ENCODE measurements at regions of chr1 and their contacts with region 1.

Region 1: DNA sequence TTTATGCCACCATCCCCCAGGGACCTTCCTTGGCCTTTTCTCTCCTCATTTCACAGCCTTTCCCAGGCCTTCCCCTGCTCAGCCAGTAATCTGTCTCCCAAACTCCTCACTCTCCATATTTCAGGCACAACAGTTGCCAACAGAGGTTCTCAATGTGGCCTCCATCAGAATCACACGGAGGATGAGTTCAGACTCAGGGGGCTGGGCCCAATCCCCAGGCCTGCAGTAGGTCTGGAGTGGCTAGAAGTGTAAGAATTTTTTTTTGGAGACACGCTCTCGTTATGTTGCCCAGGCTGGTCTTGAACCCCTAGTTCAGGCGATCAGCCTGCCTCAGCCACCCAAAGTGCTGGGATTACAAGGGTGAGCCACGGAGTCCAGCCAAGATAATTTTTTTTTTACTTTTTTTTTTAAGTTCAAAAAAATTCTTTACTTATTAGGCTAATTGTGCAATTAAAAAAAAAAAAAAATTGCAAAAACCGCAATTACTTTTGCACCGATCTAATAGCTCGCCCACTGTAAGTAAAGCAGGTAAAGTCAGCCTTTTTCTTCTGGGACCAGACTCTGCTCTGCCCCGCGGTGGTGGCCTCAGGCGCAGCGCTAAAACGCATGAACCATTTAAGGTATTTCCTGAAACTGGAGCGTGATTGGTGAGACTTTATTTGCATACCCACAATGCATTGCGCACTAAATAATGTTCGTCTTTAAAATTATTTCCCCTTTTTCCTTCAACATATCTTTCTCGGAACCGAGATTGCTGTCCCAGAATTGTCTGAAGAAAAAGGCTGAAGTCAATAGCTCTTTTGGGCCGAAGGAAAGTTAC is 18.7 kb downstream of the KIAA2013 start:
- DNase-seq: peak; percentile 92
- H3K4me3 Mint-ChIP-seq: peak overlapping the region; percentile 87
- H3K27ac Mint-ChIP-seq: peak overlapping the region; percentile 98
- H3K4me1 Mint-ChIP-seq: peaks cover 23% of the 10 kb centered on the region
- H3K27me3 Mint-ChIP-seq: peaks cover 7% of the 10 kb centered on the region

Region 2: DNA sequence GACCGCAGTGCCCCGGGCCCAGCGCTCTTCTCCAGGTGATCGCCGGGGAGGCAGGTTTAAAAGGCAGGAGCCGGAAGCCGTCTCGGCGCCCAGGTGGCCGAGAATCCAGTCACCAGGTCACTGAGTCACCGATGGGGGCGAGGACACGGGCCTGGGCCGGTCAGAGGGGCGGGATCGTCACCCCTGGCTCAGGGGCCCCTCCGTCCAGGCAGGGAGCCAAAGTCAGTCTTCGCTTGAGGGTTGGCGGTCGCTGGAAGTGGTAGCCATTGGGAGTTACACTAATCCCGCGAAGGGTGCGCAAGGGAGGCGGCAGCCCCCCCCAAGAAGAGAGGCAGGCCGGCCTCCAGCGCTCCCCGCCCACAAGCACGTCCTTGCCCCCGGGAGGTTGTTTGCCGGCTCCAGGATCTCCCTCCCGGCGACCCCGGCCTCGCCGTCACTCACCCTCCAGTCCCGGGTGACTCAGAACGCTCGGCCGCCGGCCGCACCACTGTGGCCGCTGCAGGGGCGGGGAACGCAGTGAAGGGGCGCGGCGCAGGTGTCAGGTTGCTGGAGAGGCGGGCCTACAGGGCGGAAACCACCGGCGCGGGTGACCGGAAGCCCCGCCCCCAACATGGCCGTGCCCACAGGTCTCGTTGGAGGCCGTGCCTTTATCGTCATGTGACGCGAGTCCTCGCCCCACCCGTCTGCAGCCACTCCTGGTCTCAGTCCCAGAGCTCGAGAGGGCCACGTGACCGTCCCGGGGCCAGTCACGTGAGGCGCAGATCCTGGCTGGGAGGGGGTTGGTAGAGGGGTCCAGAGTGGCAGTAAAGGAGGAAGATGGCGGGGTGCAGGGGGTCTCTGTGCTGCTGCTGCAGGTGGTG is 101.8 kb before region 1 on chr1 and contains the starts of genes CLCN6 and MTHFR:
- intact Hi-C with region 1: loop called (anchors 5 kb)
- DNase-seq: peak; percentile 99
- H3K4me3 Mint-ChIP-seq: peak within 1 kb of the TSS; percentile 90
- H3K27ac Mint-ChIP-seq: peak within 1 kb of the TSS; percentile 88
- H3K4me1 Mint-ChIP-seq: peaks cover 56% of the 10 kb centered on the region
- H3K27me3 Mint-ChIP-seq: no peaks in the 10 kb centered on the region
- total RNA-seq, gene CLCN6: 18.8 and 18.9 TPM in 2 replicates
- total RNA-seq, gene MTHFR: 18.8 and 21.4 TPM in 2 replicates

Region 3: DNA sequence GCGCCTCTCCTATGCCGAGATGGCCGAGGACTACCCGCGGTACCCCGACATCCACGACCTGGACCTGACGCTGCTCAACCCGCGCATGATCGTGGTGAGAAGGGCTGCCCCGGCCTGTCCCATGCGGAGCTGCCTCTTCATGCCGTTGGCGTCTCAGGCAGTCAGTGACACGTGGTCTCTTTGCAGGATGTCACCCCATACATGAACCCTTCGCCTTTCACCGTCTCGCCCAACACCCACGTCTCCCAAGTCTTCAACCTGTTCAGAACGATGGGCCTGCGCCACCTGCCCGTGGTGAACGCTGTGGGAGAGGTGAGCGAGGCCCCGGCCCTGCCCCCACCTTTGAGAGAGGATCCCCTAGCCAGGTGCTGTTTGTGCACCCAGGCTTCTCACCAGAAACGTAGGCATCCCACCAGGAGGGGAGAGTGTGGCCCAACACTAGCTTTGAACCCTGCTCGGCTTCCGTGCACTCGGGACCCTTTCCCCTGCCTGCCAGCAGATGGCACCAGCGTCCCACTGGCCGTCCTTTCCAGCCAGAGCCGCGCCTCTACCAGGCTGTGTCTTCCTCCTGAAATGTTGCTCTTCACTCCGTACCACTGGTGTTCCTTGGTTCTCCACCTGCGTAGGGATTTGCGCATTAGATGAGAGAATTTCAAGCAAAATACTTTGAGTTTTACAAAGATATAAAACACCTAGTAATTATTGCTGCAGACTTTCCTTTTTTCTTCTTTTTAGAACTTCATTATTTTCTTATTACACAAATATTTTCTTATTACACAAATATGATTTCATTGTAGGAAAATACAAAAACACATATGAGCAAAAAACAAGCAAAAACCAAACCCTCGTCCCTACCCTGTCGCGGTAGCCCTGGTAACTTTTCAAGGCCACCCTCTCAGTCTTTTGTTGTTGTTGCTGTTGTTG is 68.9 kb before region 1 on chr1:
- intact Hi-C with region 1: loop called (anchors 5 kb)
- DNase-seq: peak; percentile 59
- H3K4me3 Mint-ChIP-seq: no peak overlapping the region
- H3K27ac Mint-ChIP-seq: no peak overlapping the region
- H3K4me1 Mint-ChIP-seq: peaks cover 3% of the 10 kb centered on the region
- H3K27me3 Mint-ChIP-seq: no peaks in the 10 kb centered on the region

Region 4: GRCh38 chr1:11893907-11894251 is 13.6 kb before region 1 on chr1:
- intact Hi-C with region 1: no loop called
- DNase-seq: peak; percentile 54
- H3K4me3 Mint-ChIP-seq: no peak overlapping the region
- H3K27ac Mint-ChIP-seq: no peak overlapping the region
- H3K4me1 Mint-ChIP-seq: no peaks in the 10 kb centered on the region
- H3K27me3 Mint-ChIP-seq: peaks cover 26% of the 10 kb centered on the region

Region 5: GRCh38 chr1:11934302-11935056 is 27.0 kb after region 1 on chr1 and contains the start of gene PLOD1:
- intact Hi-C with region 1: loop called (anchors 1 kb)
- DNase-seq: peak; percentile 76
- H3K4me3 Mint-ChIP-seq: peak within 1 kb of the TSS; percentile 82
- H3K27ac Mint-ChIP-seq: peak within 1 kb of the TSS; percentile 38
- H3K4me1 Mint-ChIP-seq: peaks cover 8% of the 10 kb centered on the region
- H3K27me3 Mint-ChIP-seq: no peaks in the 10 kb centered on the region
- total RNA-seq, gene PLOD1: 39.4 and 44.0 TPM in 2 replicates

Region 6: DNA sequence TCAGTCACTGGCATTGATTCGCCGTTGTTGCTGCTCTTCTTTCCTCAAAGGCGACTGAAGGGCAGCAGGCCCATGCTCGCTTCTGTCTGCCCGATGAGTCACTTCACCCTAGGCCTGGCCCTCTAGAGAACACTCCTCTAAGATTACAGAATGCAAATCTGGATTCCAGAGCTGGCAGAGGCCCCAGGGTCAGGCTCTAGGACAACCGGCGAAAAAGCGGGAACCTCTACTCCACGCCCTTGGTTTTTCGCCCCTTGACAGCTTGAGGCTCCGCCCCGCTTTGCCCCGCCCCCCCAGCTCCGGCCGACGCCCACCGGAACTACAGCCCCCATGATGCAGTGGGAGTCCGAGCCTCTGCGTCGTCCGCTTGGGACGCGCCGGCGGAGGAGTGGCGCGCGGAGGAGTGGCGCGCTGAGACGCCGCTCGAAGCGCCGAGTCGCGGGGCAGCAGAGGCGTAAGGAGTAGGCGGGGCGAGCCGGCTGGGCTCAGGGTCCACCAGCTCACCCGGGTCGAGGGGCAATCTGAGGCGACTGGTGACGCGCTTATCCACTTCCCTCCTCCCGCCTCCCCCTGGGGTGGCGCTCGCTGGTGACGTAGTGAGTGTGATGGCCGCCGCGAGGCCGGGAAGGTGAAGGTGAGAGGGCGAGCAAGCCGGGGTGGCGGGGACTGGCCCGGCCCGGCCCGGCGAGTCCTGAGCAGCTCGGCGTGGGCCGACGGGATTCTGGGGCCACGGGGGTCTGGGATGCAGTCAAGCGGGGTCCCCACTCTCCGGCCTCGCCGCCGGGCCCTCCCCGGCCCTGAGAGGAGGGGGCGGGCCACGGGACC is 72.6 kb after region 1 on chr1 and contains the start of gene MFN2:
- intact Hi-C with region 1: loop called (anchors 5 kb)
- DNase-seq: peak; percentile 92
- H3K4me3 Mint-ChIP-seq: peak within 1 kb of the TSS; percentile 96
- H3K27ac Mint-ChIP-seq: peak within 1 kb of the TSS; percentile 97
- H3K4me1 Mint-ChIP-seq: peaks cover 32% of the 10 kb centered on the region
- H3K27me3 Mint-ChIP-seq: no peaks in the 10 kb centered on the region
- total RNA-seq, gene MFN2: 67.9 and 69.5 TPM in 2 replicates

Region 7: DNA sequence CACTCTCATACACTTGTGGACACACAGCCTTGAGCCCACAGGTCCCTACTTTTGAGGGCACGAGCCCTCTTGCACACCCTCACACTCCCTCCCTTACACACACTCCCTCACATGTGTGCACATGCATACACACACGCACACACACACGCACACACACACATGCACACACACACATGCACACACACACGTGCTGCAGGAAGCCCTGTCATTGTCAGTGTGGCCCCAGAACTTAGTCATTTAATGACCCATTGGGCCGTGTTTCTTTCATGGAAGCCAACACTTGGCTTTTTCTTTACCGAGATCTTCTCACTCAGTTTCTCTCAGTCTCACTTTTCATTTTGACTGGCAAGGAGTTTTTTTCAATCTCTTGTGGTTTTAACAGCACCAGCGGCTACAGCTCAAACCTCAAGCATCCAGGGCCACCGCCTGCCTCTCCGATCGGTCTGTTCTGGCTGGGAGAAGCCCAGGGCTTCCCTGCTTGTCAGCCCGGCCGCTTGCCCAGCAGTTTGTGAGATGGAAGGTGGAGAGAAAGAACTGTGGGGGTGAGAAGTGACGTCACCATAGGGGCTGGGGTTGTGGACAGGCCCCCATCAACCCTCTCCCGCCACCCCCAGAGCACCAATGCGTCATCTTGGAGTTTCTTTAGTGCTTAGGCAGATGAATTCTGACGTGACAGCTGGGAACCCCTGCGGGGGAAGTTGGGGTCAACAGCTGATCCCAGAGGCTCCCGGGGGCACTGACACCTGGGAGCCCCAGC is 139.8 kb after region 1 on chr1:
- intact Hi-C with region 1: loop called (anchors 1 kb)
- DNase-seq: peak; percentile 72
- H3K4me3 Mint-ChIP-seq: no peak overlapping the region
- H3K27ac Mint-ChIP-seq: no peak overlapping the region
- H3K4me1 Mint-ChIP-seq: peaks cover 31% of the 10 kb centered on the region
- H3K27me3 Mint-ChIP-seq: no peaks in the 10 kb centered on the region

Measured in activated T-helper 2 cell treated with anti-CD3 and anti-CD28 coated beads, Interferon-gamma antibody, Interleukin-2, Interleukin-4, amounts not matched to agents 10 μg/mL and 5 μg/mL and 100 μg/mL, durations not matched to agents 14 hours and 24 hours and 36 hours (primary cell).